Psoas muscle (tissue), 8 donors: ENCODE measurements at regions of chr9 and their contacts with region 1.

Region 1: GRCh38 chr9:27626244-27627187 is 53.2 kb upstream of the C9orf72 start:
- DNase-seq: no peak
- ATAC-seq: no peak
- H3K4me3 ChIP-seq: no peak overlapping the region
- H3K27ac ChIP-seq: no peak overlapping the region
- H3K4me1 ChIP-seq: no peaks in the 10 kb centered on the region
- H3K27me3 ChIP-seq: no peaks in the 10 kb centered on the region
- CTCF ChIP-seq: no peak

Region 2: DNA sequence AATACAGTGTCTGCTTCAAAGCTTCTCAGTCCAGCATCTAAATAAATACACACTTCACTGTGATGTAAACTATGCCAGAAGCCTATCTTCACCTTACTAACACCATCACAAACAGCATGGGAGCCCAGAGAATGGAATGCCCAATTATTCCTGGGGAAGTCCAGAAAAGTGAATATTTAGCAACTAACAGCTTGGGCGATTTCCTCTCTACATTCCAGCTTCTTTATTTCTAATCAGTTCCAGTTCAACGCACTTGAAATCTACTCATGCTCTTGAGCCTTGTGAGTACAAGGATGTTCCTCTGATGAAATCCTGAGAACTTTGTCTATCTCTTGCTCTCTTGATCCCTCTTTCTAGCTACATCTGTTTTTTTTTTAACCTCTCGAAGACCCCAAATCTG is 47.1 kb after region 1 on chr9:
- intact Hi-C with region 1: loop called in 1 of 2 experiments (anchors 10 kb)
- DNase-seq: no peak
- ATAC-seq: no peak
- H3K4me3 ChIP-seq: no peak overlapping the region
- H3K27ac ChIP-seq: no peak overlapping the region
- H3K4me1 ChIP-seq: no peaks in the 10 kb centered on the region
- H3K27me3 ChIP-seq: peaks cover 0 to 5% (median 0%) of the 10 kb centered on the region in 3 donors
- CTCF ChIP-seq: no peak

Region 3: GRCh38 chr9:27688954-27689353 is 62.4 kb after region 1 on chr9:
- intact Hi-C with region 1: no loop called
- DNase-seq: no peak
- ATAC-seq: no peak
- H3K4me3 ChIP-seq: no peak overlapping the region
- H3K27ac ChIP-seq: no peak overlapping the region
- H3K4me1 ChIP-seq: no peaks in the 10 kb centered on the region
- H3K27me3 ChIP-seq: no peaks in the 10 kb centered on the region
- CTCF ChIP-seq: no peak

Region 4: DNA sequence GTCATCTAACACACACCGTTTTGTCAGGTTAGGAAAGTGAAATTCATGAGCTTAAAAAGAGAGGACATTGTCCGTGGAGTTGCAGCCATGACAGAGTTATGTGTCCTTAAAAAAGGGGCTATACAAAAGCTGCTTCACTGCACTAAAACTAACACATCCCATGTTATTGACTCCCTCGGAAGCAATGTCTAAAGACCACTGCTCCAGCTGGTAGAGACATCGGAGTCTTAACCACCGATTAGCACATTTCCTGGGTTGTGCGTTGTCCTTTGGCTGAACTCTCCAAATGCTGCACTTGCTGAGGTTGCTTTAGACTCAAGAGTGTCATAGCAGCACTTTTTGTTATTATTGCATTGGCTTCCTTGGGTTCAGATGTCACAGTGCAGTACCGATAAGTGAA is 75.1 kb after region 1 on chr9:
- intact Hi-C with region 1: no loop called
- DNase-seq: peak; percentile 13 to 54
- ATAC-seq: peak in 2 of 4 donors; percentile 54 to 68
- H3K4me3 ChIP-seq: no peak overlapping the region
- H3K27ac ChIP-seq: peak overlapping the region; percentile 53
- H3K4me1 ChIP-seq: no peaks in the 10 kb centered on the region
- H3K27me3 ChIP-seq: no peaks in the 10 kb centered on the region
- CTCF ChIP-seq: no peak